Right ventricle myocardium inferior (tissue), 1 donor: ENCODE measurements at regions of chr10 and their contacts with region 1.

Region 1: GRCh38 chr10:113854011-113854760 is at the starts of genes DCLRE1A and NHLRC2:
- DNase-seq: peak; percentile 92
- ATAC-seq: peak; percentile 87
- total RNA-seq, gene DCLRE1A: 6.8 TPM
- total RNA-seq, gene NHLRC2: 60.6 TPM

Region 2: GRCh38 chr10:113802997-113803396 is 51.2 kb before region 1 on chr10:
- intact Hi-C with region 1: loop called (anchors 5 kb)
- DNase-seq: no peak
- ATAC-seq: no peak

Region 3: DNA sequence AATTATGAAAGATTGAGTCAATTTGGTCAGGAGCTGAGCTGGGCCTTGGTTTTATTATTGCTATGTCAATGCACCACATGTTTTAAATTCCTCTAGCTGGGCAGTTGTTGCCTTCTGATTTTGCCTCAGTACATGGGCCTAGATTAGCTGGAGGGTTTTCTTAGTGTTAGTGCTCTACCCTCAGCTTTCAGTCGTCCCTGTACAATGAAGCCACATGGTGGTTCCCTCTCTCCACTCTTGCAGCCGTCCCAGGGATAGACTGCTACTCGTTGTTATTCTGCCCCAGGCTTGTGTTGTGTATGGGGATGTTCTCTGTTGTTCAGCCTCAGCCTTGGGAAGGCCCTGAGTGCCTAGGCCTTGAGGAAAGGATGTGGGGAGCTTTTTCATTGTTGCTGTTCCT is 37.3 kb after region 1 on chr10:
- intact Hi-C with region 1: loop called (anchors 5 kb)
- DNase-seq: no peak
- ATAC-seq: peak; percentile 89

Region 4: DNA sequence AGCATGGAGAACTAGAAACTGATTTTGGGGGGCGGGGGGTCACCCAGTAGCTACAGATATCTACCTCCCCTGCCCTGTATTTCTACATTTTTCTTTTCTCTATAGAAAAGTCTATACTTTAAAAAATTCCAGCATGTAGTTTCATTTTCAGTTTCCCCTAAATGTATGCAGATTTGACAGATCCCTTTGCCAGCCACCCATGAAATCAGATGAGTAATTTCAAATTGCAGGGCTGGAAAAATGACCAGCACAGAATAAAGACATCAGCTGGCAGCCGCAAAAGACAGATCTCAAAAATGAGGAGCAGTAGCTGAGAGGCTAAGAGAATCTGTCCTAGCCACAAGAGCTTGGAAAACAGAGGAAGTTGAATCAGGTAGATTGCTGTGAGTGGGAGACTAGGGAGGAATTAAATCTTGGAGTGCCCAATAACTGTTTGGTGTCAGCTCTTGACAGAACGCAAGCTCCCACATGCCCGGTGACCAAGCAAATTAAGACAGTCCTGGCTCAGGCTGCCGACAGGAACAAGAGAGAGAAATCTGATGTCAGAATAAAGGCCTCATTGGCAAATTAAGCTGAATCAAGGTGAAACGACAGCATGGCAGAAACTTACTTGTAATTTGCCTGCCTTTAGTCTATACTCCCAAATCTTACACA is 214.0 kb after region 1 on chr10:
- intact Hi-C with region 1: loop called (anchors 5 kb)
- DNase-seq: no peak
- ATAC-seq: peak; percentile 18